HepG2 (cell line): ENCODE measurements at regions of chr9 and their contacts with region 1.

Region 1: GRCh38 chr9:21777701-21778100 is 24.7 kb upstream of the MTAP start:
- DNase-seq: no peak
- ATAC-seq: no peak
- H3K4me3 ChIP-seq: no peak overlapping the region
- H3K27ac ChIP-seq: no peak overlapping the region
- H3K4me1 ChIP-seq: no peaks in the 10 kb centered on the region
- H3K27me3 ChIP-seq: no peaks in the 10 kb centered on the region
- CTCF ChIP-seq: no peak
- EP300 ChIP-seq: no peak
- POLR2A ChIP-seq: no peak
- RAD21 ChIP-seq: no peak

Region 2: DNA sequence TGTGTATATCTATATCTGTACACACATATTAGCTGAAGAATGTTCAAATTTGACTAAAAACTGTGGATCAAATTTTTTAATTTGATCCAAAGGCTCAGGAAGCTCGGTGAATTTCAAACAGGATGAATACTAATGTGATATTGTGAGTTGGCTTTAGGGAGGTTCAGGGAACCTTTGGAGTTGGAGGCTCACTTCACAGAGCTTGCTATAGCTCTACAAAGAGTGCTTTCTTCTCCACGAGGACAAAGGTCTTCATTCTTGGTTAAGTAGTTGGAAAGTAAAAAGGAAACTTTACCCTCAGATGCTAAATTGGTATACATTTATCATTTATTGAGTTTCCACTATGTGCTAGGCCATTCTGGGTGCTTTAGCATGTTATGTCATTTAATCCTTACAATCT is 11.6 kb before region 1 on chr9:
- CTCF ChIA-PET with region 1: no interaction called
- POLR2A ChIA-PET with region 1: no interaction called
- in situ Hi-C with region 1: no loop called
- intact Hi-C with region 1: loop called (anchors 1 kb)
- DNase-seq: peak; percentile 7
- ATAC-seq: peak; percentile 63
- H3K4me3 ChIP-seq: no peak overlapping the region
- H3K27ac ChIP-seq: no peak overlapping the region
- H3K4me1 ChIP-seq: peaks cover 9% of the 10 kb centered on the region; the same call in 1 of the 2 replicates
- H3K27me3 ChIP-seq: no peaks in the 10 kb centered on the region
- CTCF ChIP-seq: no peak
- EP300 ChIP-seq: no peak
- POLR2A ChIP-seq: no peak
- RAD21 ChIP-seq: no peak